AG04450 (cell line): ENCODE measurements at regions of chr1 and their contacts with region 1.

Region 1: DNA sequence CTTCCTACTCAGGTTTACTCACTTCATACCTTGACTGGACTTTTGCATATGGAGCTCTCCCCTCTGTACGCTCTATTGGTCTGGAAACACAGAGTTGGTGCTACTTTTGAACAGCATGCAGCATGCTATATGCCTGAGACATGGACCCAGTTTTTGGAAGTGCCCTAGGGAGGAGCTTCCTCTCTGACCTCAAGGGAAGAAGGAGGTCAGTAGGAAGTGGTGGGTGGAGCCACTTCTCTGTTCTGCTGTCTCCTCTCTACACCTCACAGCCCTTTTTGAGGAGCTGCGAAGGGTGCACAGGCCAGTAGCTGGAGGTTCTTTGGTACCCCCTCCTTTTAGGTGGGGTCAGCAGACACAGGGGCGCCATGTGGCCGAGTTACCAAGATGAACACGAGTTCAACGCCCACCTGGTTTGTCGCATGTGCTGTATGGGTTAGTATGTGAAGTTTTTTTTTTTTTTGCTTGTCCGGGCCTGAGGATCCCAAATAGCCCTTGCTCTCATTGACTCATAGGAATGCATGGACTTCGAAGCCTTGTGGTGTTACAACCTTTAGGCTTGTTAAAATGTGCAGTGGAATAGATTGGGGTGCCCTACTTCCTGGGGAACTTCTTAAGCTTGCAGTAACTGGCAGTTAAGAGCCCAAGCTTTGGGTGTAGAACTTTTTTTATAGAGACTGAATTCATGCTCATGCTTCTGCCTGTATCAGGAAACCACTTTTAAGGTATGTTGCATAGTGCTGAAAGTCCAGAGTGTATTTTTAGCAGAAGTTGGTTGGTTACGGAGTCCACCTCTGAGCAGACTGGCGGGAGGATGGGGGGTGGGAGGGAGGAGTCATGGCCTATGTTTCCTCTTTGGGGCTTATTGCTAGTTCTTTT is 10.7 kb downstream of the MACF1 start:
- DNase-seq: no peak
- H3K4me3 ChIP-seq: no peak overlapping the region
- H3K27ac ChIP-seq: peak overlapping the region; percentile 13
- H3K27me3 ChIP-seq: no peaks in the 10 kb centered on the region
- CTCF ChIP-seq: no peak

Region 2: DNA sequence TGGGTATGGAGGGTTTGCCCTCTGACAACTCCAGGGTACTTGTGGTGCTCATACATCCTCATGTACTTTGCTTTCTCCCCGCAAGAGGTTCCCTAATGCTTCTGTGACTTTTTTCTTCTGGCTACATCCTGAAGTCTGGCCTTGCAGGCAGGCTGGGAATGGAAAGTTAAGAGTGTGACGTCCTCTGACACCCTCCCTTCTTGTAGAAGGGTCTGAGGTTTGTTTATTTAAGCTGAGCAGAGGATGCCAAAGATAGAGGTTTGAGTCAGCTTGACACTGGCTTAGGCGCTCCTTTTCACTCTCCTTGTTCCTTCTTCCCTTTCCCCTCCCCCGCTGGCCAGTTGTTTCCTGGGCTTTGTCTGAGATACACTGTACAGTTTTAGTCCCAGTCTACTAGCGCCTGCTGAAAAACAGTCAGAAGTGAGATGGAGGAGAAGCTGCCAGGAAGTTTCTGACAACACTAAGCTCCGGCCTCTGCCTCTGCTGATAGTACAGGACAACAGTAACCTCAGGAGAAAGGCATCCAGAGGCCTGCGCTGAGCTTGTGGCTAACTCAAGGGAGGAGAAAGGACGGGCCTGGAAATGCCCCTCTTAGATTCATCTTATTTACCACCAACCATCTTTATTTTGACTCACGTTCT is 10.7 kb before region 1 on chr1 and contains the start of gene MACF1:
- CTCF ChIA-PET with region 1: interaction called, 12 read pairs
- POLR2A ChIA-PET with region 1: interaction called, 9 read pairs
- DNase-seq: peak; percentile 85
- H3K4me3 ChIP-seq: peak within 1 kb of the TSS; percentile 74
- H3K27ac ChIP-seq: peak within 1 kb of the TSS; percentile 97
- H3K27me3 ChIP-seq: no peaks in the 10 kb centered on the region
- CTCF ChIP-seq: peak; percentile 66
- polyA plus RNA-seq, gene MACF1: 118 and 121 TPM in 2 replicates